PC-9 (cell line): ENCODE measurements at regions of chr9 and their contacts with region 1.

Region 1: GRCh38 chr9:10366171-10366779 is 246.5 kb downstream of the PTPRD start:
- DNase-seq: no peak
- H3K4me3 ChIP-seq: no peak overlapping the region
- H3K27ac ChIP-seq: no peak overlapping the region
- H3K4me1 ChIP-seq: no peaks in the 10 kb centered on the region
- H3K27me3 ChIP-seq: no peaks in the 10 kb centered on the region
- CTCF ChIP-seq: peak; percentile 66

Region 2: DNA sequence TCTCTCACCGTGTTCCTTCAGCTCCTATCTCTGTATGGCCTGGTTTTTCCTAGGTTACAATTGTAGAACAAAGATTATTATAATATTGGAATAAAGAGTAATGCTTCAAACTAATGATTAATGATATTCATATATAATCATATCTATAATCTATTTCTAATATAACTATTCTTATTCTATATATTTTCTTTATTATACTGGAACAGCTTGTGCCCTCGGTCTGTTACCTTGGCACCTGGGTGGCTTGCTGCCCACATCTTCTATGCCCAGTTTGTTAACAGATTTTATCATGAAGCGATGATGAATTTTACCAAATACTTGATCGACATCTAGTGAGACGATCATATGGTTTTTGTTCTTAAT is 1963.3 kb after region 1 on chr9:
- CTCF ChIA-PET with region 1: no interaction called
- POLR2A ChIA-PET with region 1: no interaction called
- intact Hi-C with region 1: loop called (anchors 5 kb)
- DNase-seq: no peak
- H3K4me3 ChIP-seq: no peak overlapping the region
- H3K27ac ChIP-seq: no peak overlapping the region
- H3K4me1 ChIP-seq: no peaks in the 10 kb centered on the region
- H3K27me3 ChIP-seq: no peaks in the 10 kb centered on the region
- CTCF ChIP-seq: no peak